OCI-LY7 (cell line): ENCODE measurements at regions of chr15 and their contacts with region 1.

Region 1: GRCh38 chr15:44286814-44287452 is 1.6 kb upstream of the GOLM2 start:
- DNase-seq: peak; percentile 20
- H3K4me3 ChIP-seq: peak overlapping the region; percentile 82
- H3K27ac ChIP-seq: peak overlapping the region; percentile 93
- H3K4me1 ChIP-seq: peaks cover 31% of the 10 kb centered on the region
- CTCF ChIP-seq: peak; percentile 32; the same call in 1 of the 2 replicates

Region 2: DNA sequence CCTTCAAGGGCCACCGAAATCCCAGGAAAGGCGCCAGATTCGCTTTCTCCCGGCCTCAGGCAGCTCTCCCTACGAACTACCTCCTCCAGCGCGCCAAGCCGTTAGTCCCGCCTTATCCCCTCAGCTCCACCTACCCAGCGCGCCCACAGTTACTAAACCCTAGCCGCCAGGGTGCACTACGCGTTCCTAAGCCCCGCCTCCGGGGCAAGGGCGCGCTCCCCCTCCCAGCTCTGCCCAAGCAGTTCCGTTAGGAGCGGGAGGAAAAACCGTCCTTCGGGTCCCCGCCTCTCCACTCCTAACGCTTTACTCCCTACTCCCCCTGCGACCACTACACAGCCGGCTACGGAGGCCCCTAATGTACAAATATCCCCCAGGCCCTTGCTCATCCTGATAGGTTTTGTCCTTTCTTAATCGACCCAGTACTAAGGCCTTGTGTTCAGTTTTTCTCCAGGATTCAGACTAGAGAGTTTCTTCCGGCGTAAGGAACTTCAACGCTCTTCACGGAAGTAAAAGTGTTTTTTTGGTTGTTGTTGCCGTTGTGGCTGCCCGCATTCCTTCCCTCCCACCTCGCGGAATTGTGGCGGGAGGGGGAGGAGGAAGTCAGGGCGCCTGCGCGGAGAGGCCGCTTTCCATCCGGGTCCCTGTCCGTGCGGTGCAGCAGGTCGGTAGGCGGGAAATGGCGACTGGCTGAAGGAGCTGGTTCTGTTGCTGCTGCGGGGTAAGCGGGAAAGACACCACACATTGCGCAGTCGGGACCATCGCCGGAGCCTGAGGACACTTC is 140.2 kb after region 1 on chr15 and contains the start of gene CTDSPL2:
- CTCF ChIA-PET with region 1: no interaction called
- POLR2A ChIA-PET with region 1: interaction called, 8 read pairs
- intact Hi-C with region 1: loop called (anchors 1 kb)
- DNase-seq: peak; percentile 96
- H3K4me3 ChIP-seq: peak within 1 kb of the TSS; percentile 84
- H3K27ac ChIP-seq: peak within 1 kb of the TSS; percentile 93
- H3K4me1 ChIP-seq: peaks cover 30% of the 10 kb centered on the region
- CTCF ChIP-seq: no peak; the same call in 1 of the 2 replicates
- total RNA-seq, gene CTDSPL2: 138 and 218 TPM in 2 replicates

Region 3: GRCh38 chr15:44536962-44537734 is 250.2 kb after region 1 on chr15 and contains the start of gene EIF3J:
- CTCF ChIA-PET with region 1: no interaction called
- POLR2A ChIA-PET with region 1: interaction called, 4 read pairs
- intact Hi-C with region 1: loop called (anchors 2 kb)
- DNase-seq: peak; percentile 95
- H3K4me3 ChIP-seq: peak within 1 kb of the TSS; percentile 83
- H3K27ac ChIP-seq: peak within 1 kb of the TSS; percentile 70
- H3K4me1 ChIP-seq: peaks cover 14% of the 10 kb centered on the region
- CTCF ChIP-seq: no peak
- total RNA-seq, gene EIF3J: 41.3 and 49.4 TPM in 2 replicates